GM10248 (cell line): ENCODE measurements at regions of chr6 and their contacts with region 1.

Region 1: DNA sequence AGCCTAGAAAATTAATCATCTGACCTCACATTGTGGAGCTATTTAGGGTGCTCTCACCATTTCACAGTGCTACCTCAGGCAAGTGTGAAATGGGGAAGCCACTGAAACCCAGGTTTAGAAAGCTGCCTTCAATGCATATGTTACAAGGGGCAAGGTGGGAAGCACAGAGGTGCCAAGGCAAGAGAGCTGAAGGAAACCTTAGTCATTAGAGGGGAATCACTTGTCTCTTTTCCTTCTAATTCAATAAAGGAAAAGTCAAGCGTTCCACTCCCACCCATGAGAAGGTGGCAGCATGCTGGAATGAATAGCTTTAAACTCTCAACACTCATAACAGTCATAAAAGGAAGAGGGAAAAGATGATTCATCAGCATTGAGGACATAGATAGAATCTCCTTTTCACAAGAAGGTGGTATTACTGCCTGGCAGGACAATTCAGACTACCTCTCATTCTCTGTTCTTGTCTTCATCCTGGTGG is 251.9 kb upstream of the IRAK1BP1 start:
- DNase-seq: no peak
- CTCF ChIP-seq: no peak

Region 2: DNA sequence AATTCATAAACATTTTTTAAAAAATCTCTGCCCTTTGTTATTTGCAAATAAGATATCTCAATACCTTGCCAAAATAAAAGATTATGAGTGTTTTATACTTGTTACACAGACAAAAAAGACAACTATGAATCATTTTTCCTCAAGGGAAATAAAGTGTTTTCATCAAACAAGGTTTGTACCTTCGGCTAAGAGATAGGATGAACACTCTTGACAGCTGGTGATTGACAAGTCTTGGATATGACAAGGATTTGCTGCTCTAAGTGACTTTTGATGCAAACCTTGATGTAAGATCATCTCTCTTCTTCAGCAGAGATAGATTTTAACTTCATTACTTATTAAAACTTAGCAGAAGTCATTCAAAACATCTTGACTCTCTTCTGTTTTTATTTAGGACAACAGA is 262.4 kb before region 1 on chr6:
- CTCF ChIA-PET with region 1: no interaction called
- POLR2A ChIA-PET with region 1: no interaction called
- DNase-seq: no peak
- CTCF ChIP-seq: no peak

Region 3: GRCh38 chr6:78533426-78533825 is 82.0 kb before region 1 on chr6:
- CTCF ChIA-PET with region 1: no interaction called
- POLR2A ChIA-PET with region 1: no interaction called
- DNase-seq: no peak
- CTCF ChIP-seq: no peak

Region 4: GRCh38 chr6:78598966-78599365 is 16.5 kb before region 1 on chr6:
- CTCF ChIA-PET with region 1: interaction called, 10 read pairs
- POLR2A ChIA-PET with region 1: no interaction called
- DNase-seq: no peak
- CTCF ChIP-seq: no peak